B cell (primary cell): ENCODE measurements at regions of chr22 and their contacts with region 1.

Region 1: GRCh38 chr22:50148991-50149721 is 21.4 kb upstream of the PANX2 start:
- DNase-seq: peak; percentile 90
- ATAC-seq: peak; percentile 99
- H3K4me3 ChIP-seq: no peak overlapping the region
- H3K4me3 Mint-ChIP-seq: no peak overlapping the region
- H3K27ac ChIP-seq: no peak overlapping the region
- H3K27ac Mint-ChIP-seq: peak overlapping the region; percentile 72
- H3K4me1 ChIP-seq: peaks cover 3 to 8% of the 10 kb centered on the region in 2 donors
- H3K4me1 Mint-ChIP-seq: peaks cover 7% of the 10 kb centered on the region
- H3K27me3 ChIP-seq: peaks cover 0 to 3% (median 0%) of the 10 kb centered on the region in 4 experiments
- H3K27me3 Mint-ChIP-seq: peaks cover 4% of the 10 kb centered on the region
- CTCF ChIP-seq: peak; percentile 94

Region 2: GRCh38 chr22:49979587-49980264 is 169.4 kb before region 1 on chr22:
- CTCF ChIA-PET with region 1: no interaction called
- POLR2A ChIA-PET with region 1: no interaction called
- intact Hi-C with region 1: no loop called
- DNase-seq: peak; percentile 52
- ATAC-seq: no peak
- H3K4me3 ChIP-seq: no peak overlapping the region
- H3K4me3 Mint-ChIP-seq: no peak overlapping the region
- H3K27ac ChIP-seq: no peak overlapping the region
- H3K27ac Mint-ChIP-seq: no peak overlapping the region
- H3K4me1 ChIP-seq: peaks cover 28 to 37% of the 10 kb centered on the region in 2 donors
- H3K4me1 Mint-ChIP-seq: peaks cover 29% of the 10 kb centered on the region
- H3K27me3 ChIP-seq: peaks cover 0 to 11% (median 5%) of the 10 kb centered on the region in 4 experiments
- H3K27me3 Mint-ChIP-seq: peaks cover 14% of the 10 kb centered on the region
- CTCF ChIP-seq: peak; percentile 51

Region 3: GRCh38 chr22:50200461-50201190 is 51.5 kb after region 1 on chr22 and contains the start of gene SELENOO:
- CTCF ChIA-PET with region 1: interaction called, 75 read pairs
- POLR2A ChIA-PET with region 1: no interaction called
- intact Hi-C with region 1: loop called (anchors 2 kb)
- DNase-seq: peak; percentile 96
- ATAC-seq: peak; percentile 92
- H3K4me3 ChIP-seq: peak within 1 kb of the TSS; percentile 25 to 80 (median 70)
- H3K4me3 Mint-ChIP-seq: peak within 1 kb of the TSS; percentile 89
- H3K27ac ChIP-seq: peak within 1 kb of the TSS; percentile 23 to 81
- H3K27ac Mint-ChIP-seq: peak within 1 kb of the TSS; percentile 86
- H3K4me1 ChIP-seq: peaks cover 16 to 26% of the 10 kb centered on the region in 2 donors
- H3K4me1 Mint-ChIP-seq: peaks cover 26% of the 10 kb centered on the region
- H3K27me3 ChIP-seq: no peaks in the 10 kb centered on the region
- H3K27me3 Mint-ChIP-seq: no peaks in the 10 kb centered on the region
- CTCF ChIP-seq: no peak
- total RNA-seq, gene SELENOO: 73.0 and 74.6 TPM in 2 replicates

Region 4: GRCh38 chr22:50209893-50210292 is 60.7 kb after region 1 on chr22:
- CTCF ChIA-PET with region 1: interaction called, 75 read pairs
- POLR2A ChIA-PET with region 1: interaction called, 5 read pairs
- intact Hi-C with region 1: loop called (anchors 1 kb)
- DNase-seq: peak; percentile 85
- ATAC-seq: peak; percentile 26
- H3K4me3 ChIP-seq: no peak overlapping the region
- H3K4me3 Mint-ChIP-seq: no peak overlapping the region
- H3K27ac ChIP-seq: no peak overlapping the region
- H3K27ac Mint-ChIP-seq: peak overlapping the region; percentile 27
- H3K4me1 ChIP-seq: peaks cover 15 to 26% of the 10 kb centered on the region in 2 donors
- H3K4me1 Mint-ChIP-seq: peaks cover 34% of the 10 kb centered on the region
- H3K27me3 ChIP-seq: no peaks in the 10 kb centered on the region
- H3K27me3 Mint-ChIP-seq: no peaks in the 10 kb centered on the region
- CTCF ChIP-seq: peak; percentile 85

Region 5: GRCh38 chr22:50218996-50219727 is 70.0 kb after region 1 on chr22:
- CTCF ChIA-PET with region 1: interaction called, 57 read pairs
- POLR2A ChIA-PET with region 1: no interaction called
- intact Hi-C with region 1: no loop called
- DNase-seq: no peak
- ATAC-seq: no peak
- H3K4me3 ChIP-seq: no peak overlapping the region
- H3K4me3 Mint-ChIP-seq: no peak overlapping the region
- H3K27ac ChIP-seq: no peak overlapping the region
- H3K27ac Mint-ChIP-seq: no peak overlapping the region
- H3K4me1 ChIP-seq: no peaks in the 10 kb centered on the region
- H3K4me1 Mint-ChIP-seq: peaks cover 2% of the 10 kb centered on the region
- H3K27me3 ChIP-seq: no peaks in the 10 kb centered on the region
- H3K27me3 Mint-ChIP-seq: no peaks in the 10 kb centered on the region
- CTCF ChIP-seq: no peak

Region 6: DNA sequence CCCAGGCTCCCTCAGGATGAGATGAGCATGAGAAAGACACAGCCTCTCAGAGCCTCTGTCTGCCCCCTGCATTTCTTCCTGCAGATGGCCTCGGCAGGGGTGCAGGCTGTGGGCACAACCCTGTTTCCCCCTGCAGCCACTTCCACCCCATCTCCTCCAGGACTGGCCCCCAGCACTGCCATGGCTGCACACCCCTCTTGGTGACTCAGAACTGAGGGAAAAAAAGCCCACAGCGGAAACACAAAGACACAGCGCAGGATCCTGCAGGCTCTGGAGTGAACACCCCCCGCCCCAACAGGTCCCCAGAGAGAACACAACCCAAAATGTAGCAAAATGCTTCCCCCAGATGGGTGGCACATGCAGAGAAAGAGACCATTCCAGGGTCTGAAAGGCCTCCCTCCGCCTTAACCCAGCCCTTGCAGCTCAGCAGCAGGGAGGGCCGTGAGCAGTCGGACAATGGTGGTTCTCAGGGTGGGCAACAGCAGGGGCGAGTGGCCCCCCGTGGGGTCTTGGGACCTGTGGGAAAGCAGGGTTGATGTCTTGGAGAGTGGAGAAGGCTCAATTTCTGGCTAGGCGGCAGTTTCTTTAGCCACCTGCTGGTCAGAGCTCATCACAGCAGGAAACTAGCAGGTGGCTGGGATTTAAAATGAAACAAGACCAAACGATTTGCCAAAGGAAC is 87.7 kb after region 1 on chr22:
- CTCF ChIA-PET with region 1: interaction called, 12 read pairs
- POLR2A ChIA-PET with region 1: no interaction called
- intact Hi-C with region 1: loop called (anchors 1 kb)
- DNase-seq: no peak
- ATAC-seq: no peak
- H3K4me3 ChIP-seq: no peak overlapping the region
- H3K4me3 Mint-ChIP-seq: no peak overlapping the region
- H3K27ac ChIP-seq: no peak overlapping the region
- H3K27ac Mint-ChIP-seq: no peak overlapping the region
- H3K4me1 ChIP-seq: peaks cover 6 to 11% of the 10 kb centered on the region in 2 donors
- H3K4me1 Mint-ChIP-seq: peaks cover 18% of the 10 kb centered on the region
- H3K27me3 ChIP-seq: no peaks in the 10 kb centered on the region
- H3K27me3 Mint-ChIP-seq: no peaks in the 10 kb centered on the region
- CTCF ChIP-seq: peak; percentile 51

Region 7: DNA sequence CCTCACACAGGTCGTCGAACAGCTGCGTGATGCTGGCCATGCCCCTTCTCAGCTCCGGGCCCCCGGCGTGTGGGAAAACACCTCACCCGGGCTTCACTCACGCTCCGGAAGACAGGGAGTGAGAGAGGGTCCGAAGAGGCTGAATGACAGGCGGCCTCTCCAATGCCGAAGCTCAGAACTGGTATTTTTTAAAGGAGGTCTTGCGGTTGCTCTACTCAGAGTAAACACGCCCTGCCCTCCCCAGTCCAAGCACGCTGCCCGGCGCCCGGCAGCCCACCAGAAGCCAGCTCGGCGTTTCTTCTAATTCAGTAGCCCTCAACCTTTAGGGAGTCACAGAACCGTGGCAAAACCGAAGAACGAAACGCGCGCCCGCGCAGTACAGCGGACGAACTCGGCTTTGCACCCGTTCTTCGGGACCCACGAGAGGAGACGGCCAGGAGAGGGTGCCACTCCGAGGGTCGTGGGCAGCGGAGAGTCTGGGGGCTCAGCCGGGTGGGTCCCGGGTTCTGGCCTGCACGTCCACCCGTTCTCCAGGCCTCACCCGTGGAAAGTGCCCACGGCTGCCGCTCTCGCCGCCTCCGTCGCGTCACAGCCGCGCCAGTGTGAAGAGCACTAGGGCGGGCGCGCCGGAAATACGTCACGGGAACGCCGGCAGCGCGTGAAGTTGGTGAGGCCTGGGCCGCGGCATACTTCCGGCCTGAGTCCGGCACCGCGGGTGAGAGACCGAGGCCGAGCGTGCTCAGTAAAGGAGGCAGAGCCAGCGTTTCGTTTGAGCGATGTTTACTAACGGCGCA is 95.5 kb after region 1 on chr22 and contains the start of gene TUBGCP6:
- CTCF ChIA-PET with region 1: interaction called, 12 read pairs
- POLR2A ChIA-PET with region 1: no interaction called
- intact Hi-C with region 1: no loop called
- DNase-seq: peak; percentile 96
- ATAC-seq: peak; percentile 81
- H3K4me3 ChIP-seq: peak within 1 kb of the TSS; percentile 65 to 99 (median 90)
- H3K4me3 Mint-ChIP-seq: peak within 1 kb of the TSS; percentile 96
- H3K27ac ChIP-seq: peak within 1 kb of the TSS; percentile 91 to 96
- H3K27ac Mint-ChIP-seq: peak within 1 kb of the TSS; percentile 99
- H3K4me1 ChIP-seq: peaks cover 33 to 66% of the 10 kb centered on the region in 2 donors
- H3K4me1 Mint-ChIP-seq: peaks cover 40% of the 10 kb centered on the region
- H3K27me3 ChIP-seq: no peaks in the 10 kb centered on the region
- H3K27me3 Mint-ChIP-seq: no peaks in the 10 kb centered on the region
- CTCF ChIP-seq: no peak
- total RNA-seq, gene TUBGCP6: 137 and 139 TPM in 2 replicates